ENCODE measurements at regions of chr2 and their contacts with region 1.

Region 1: DNA sequence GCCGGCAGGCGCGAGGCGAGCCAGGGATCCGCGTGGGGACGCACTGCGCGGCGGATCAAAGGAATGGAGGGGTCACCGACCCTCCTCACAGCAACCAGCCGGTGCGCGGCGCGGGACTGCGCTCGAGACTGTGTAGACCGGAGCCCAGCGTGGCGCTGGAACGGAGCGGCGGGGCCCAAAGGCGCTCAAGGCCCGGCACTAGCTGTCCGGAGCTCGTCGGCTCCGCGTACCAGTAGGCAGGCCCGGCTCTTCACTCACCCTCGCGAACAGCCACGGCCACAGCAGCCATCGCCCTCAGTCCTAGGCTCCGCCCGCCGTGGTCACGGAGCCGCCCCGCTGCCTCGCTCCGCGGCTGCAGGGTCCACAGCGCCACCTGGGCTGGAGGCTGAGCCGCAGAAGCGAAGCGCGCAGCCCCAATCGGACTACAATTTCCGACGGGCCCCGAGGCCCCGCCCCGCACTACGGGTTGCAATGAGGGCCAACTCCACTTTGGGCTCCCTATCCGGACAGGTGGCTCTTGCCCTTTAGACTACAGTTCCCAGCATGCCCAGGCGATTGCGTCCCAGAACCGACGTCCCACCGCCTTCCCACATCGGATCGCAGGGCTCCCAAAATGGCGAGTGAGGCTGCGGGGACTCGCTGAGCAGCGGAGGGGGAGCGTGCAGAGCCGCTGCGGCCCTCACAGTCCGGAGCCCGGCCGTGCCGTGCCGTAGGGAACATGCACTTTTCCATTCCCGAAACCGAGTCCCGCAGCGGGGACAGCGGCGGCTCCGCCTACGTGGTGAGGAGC is at the starts of genes EIF2B4 and SNX17:
- DNase-seq: peak; percentile 97 to 100
- H3K4me3 ChIP-seq: peak within 1 kb of the TSS; percentile 70 to 84
- H3K27ac ChIP-seq: peak within 1 kb of the TSS; percentile 87 to 95
- H3K4me1 ChIP-seq: peaks cover 9 to 23% of the 10 kb centered on the region in 2 donors
- H3K27me3 ChIP-seq: no peaks in the 10 kb centered on the region
- CTCF ChIP-seq: peak; percentile 68 to 87 (median 83)
- total RNA-seq, gene EIF2B4: 34.8 TPM
- total RNA-seq, gene SNX17: 94.0 TPM

Region 2: DNA sequence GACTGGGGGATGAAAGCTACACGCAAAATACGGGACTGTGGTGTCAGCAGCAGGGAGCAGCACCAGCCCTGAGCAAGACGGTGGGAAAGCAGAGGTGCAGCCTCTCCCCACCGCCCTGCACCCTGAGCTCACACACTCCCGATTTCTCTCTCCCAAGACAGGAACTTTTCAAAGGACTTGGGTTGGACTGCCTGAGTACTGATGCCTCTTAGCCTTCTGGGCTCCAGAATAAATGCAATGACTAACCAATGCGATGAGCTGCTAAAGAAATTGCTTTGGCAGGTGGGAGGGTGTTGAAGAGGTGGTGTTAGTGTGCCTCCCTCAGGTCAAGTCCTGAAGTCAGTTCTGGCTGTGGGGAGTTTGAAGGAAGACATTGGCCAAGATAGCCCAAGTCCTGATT is 78.4 kb before region 1 on chr2:
- intact Hi-C with region 1: no loop called
- DNase-seq: no peak
- H3K4me3 ChIP-seq: no peak overlapping the region
- H3K27ac ChIP-seq: no peak overlapping the region
- H3K4me1 ChIP-seq: no peaks in the 10 kb centered on the region
- H3K27me3 ChIP-seq: no peaks in the 10 kb centered on the region
- CTCF ChIP-seq: no peak

Region 3: GRCh38 chr2:27322766-27323595 is 47.2 kb before region 1 on chr2 and contains the start of gene MPV17:
- intact Hi-C with region 1: loop called (anchors 2 kb)
- DNase-seq: peak; percentile 74 to 93
- H3K4me3 ChIP-seq: peak within 1 kb of the TSS; percentile 65 to 77
- H3K27ac ChIP-seq: peak within 1 kb of the TSS; percentile 90
- H3K4me1 ChIP-seq: peaks cover 0 to 14% of the 10 kb centered on the region in 2 donors
- H3K27me3 ChIP-seq: no peaks in the 10 kb centered on the region
- CTCF ChIP-seq: no peak
- total RNA-seq, gene MPV17: 239 TPM

Region 4: GRCh38 chr2:27380626-27381545 is 10.7 kb after region 1 on chr2 and contains the start of gene ZNF513:
- intact Hi-C with region 1: loop called (anchors 1 kb)
- DNase-seq: peak; percentile 79 to 98
- H3K4me3 ChIP-seq: peak within 1 kb of the TSS; percentile 89 to 96
- H3K27ac ChIP-seq: peak within 1 kb of the TSS; percentile 89 to 90
- H3K4me1 ChIP-seq: peaks cover 0 to 16% of the 10 kb centered on the region in 2 donors
- H3K27me3 ChIP-seq: no peaks in the 10 kb centered on the region
- CTCF ChIP-seq: no peak
- total RNA-seq, gene ZNF513: 17.7 TPM

Region 5: GRCh38 chr2:27390822-27391679 is 20.8 kb after region 1 on chr2:
- intact Hi-C with region 1: no loop called
- DNase-seq: no peak
- H3K4me3 ChIP-seq: no peak overlapping the region
- H3K27ac ChIP-seq: no peak overlapping the region
- H3K4me1 ChIP-seq: no peaks in the 10 kb centered on the region
- H3K27me3 ChIP-seq: no peaks in the 10 kb centered on the region
- CTCF ChIP-seq: no peak

Region 6: DNA sequence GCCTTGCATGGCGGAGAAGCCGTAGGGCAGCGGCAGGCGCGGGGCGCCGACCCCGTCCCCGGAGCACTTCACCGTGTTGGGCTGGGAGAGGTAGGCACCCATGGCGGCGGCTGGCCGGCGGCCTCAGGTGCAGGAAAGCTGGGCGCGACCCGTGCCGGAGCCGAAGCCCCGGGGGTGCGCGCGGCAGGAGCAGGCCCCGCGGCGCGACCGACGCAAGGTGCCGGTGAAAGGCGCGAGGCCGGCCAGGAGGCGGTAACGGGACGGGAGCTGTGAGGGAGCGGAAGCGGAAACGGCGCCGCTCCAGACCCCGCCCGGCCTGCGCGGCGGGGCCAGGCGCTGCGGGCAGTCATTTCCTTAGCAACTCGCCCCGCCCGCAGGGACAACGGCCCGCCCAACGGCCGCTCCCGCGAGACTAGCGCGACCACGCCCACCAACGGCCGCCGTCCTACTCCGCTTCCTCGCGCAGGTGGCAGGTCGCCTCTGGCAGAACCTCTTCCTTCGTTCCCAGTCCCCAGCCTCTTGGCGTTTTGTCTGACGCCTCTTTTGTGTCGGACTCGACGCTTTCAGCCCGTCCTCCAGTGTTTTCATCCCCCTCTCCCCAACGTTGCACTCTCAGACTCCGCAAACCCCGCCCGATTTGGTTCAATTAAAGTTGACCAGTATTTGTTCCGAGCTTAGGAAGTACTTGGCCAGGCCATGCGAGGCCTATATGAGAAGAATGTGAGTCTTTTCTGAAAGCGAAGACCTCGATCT is 39.3 kb after region 1 on chr2 and contains the start of gene PPM1G:
- intact Hi-C with region 1: loop called (anchors 5 kb)
- DNase-seq: peak; percentile 56 to 95
- H3K4me3 ChIP-seq: peak within 1 kb of the TSS; percentile 96 to 97
- H3K27ac ChIP-seq: peak within 1 kb of the TSS; percentile 80 to 91
- H3K4me1 ChIP-seq: peaks cover 6 to 12% of the 10 kb centered on the region in 2 donors
- H3K27me3 ChIP-seq: no peaks in the 10 kb centered on the region
- CTCF ChIP-seq: no peak
- total RNA-seq, gene PPM1G: 24.7 TPM

Region 7: GRCh38 chr2:27441958-27442919 is 72.0 kb after region 1 on chr2 and contains the start of gene KRTCAP3:
- intact Hi-C with region 1: no loop called
- DNase-seq: no peak
- H3K4me3 ChIP-seq: peak within 1 kb of the TSS in 1 of 2 donors; percentile 25
- H3K27ac ChIP-seq: peak within 1 kb of the TSS; percentile 59 to 67
- H3K4me1 ChIP-seq: peaks cover 0 to 9% of the 10 kb centered on the region in 2 donors
- H3K27me3 ChIP-seq: no peaks in the 10 kb centered on the region
- CTCF ChIP-seq: no peak
- total RNA-seq, gene KRTCAP3: not detected

Region 8: DNA sequence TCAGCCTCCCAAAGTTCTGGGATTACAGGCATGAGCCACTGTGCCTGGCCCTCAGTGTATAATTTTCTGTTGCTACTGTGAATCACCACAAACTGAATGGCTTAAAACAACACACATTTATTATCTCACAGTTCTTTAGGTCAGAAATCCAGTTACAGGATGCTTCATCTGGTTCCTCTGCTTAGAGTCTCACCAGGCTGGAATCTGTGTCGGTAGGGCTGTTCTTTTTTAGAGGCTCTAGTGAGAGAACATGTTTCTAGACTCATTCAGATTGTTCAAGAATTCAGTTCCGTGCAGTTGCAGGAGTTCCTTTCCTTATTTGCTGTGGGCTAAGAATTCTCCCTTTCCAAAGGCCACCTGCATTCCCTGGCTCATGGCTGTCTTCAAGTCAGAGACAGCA is 236.4 kb after region 1 on chr2:
- intact Hi-C with region 1: no loop called
- DNase-seq: no peak
- H3K4me3 ChIP-seq: no peak overlapping the region
- H3K27ac ChIP-seq: no peak overlapping the region
- H3K4me1 ChIP-seq: no peaks in the 10 kb centered on the region
- H3K27me3 ChIP-seq: no peaks in the 10 kb centered on the region
- CTCF ChIP-seq: no peak

Measured in ascending aorta (tissue), 2 donors.